ENCODE measurements at regions of chr10 and their contacts with region 1.

Region 1: DNA sequence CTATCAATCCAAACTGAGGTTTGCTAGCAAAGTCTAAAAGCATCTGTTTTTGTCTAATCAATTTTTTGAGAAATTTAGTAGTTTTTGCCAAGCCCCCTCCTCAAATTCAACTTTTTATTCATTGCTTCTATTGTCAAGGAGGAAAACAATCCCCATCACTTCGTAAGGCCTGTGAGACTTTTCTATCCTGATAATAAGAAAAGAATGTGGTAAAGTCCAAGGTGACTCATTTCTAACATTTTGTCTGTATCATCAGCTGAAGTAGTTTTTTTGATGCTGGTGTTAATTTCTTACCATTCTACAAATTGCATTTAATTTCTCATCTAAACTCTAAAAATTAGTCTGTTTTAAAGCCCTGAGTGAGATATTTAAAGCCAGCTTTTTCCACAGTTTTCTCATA is 11.7 kb downstream of the ANK3 start:
- DNase-seq: peak; percentile 58
- ATAC-seq: no peak
- H3K4me3 ChIP-seq: no peak overlapping the region
- H3K27ac ChIP-seq: no peak overlapping the region
- H3K4me1 ChIP-seq: peaks cover 1% of the 10 kb centered on the region; the same call in 1 of the 2 replicates
- H3K27me3 ChIP-seq: no peaks in the 10 kb centered on the region
- CTCF ChIP-seq: no peak
- POLR2A ChIP-seq: no peak
- RAD21 ChIP-seq: no peak

Region 2: DNA sequence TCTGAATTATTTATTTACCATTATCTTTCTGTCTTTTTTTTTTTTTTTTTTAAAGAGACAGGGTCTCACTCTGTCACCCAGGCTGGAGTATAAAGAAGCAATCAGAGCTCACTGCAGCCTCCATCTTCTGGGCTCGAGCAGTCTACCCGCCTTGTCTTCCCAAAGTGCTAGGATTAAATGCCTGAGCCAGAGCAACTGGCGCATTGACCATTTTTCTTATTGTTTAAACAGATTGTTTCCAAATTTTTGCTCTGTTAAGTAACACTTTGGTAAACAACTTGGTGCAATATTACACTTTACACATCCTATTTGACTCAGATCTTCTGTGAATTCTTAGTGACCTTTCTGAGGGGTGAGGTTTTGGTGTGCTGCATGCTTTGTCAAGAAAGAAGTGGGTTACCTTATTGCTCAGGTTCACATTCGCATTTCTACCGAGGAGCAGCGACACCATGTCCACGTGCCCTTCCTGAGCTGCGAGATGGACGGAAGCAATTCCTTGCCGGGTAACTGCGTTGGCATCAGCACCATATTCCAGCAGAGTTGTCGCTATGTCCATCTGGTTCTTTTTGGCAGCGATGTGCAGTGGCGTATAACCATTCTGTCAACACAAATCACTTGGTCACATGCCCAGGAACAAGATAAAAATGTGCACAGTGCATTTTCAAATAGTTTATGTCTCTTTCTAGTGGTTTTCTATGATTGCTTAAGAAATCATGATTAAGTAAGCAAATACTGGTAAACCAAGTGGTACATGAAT is 191.5 kb before region 1 on chr10:
- CTCF ChIA-PET with region 1: no interaction called
- POLR2A ChIA-PET with region 1: no interaction called
- dilution Hi-C with region 1: no loop called
- in situ Hi-C with region 1: no loop called
- intact Hi-C with region 1: no loop called
- DNase-seq: peak; percentile 7
- ATAC-seq: peak; percentile 76
- H3K4me3 ChIP-seq: no peak overlapping the region
- H3K27ac ChIP-seq: no peak overlapping the region
- H3K4me1 ChIP-seq: peaks cover 3% of the 10 kb centered on the region; the same call in 1 of the 2 replicates
- H3K27me3 ChIP-seq: no peaks in the 10 kb centered on the region; the same call in 1 of the 2 replicates
- CTCF ChIP-seq: no peak
- POLR2A ChIP-seq: no peak
- RAD21 ChIP-seq: no peak

Region 3: DNA sequence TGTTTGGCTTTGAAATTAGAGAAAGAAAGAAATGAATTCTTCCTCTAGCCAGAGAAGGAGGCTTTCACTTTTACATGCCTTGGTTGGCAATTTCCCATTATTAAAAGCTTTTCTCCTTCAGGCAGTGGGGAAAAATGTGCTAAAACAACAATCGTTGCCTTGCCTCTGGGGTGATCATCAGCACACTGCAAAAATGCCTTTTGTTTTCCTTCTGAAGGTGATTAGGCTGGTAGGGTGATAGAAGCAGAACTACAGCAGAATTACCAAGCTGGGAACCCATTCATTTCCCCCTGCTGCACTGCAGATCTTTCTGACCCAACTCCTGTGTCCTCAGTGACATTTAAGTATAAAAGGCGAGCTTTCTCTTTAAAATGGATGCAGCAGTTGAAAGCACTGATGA is 10.5 kb before region 1 on chr10:
- CTCF ChIA-PET with region 1: no interaction called
- POLR2A ChIA-PET with region 1: no interaction called
- dilution Hi-C with region 1: no loop called
- in situ Hi-C with region 1: no loop called
- intact Hi-C with region 1: loop called (anchors 1 kb)
- DNase-seq: no peak
- ATAC-seq: peak; percentile 51
- H3K4me3 ChIP-seq: no peak overlapping the region
- H3K27ac ChIP-seq: no peak overlapping the region
- H3K4me1 ChIP-seq: peaks cover 7% of the 10 kb centered on the region
- H3K27me3 ChIP-seq: no peaks in the 10 kb centered on the region
- CTCF ChIP-seq: no peak
- POLR2A ChIP-seq: no peak
- RAD21 ChIP-seq: no peak